PC-3 (cell line): ENCODE measurements at regions of chr18 and their contacts with region 1.

Region 1: GRCh38 chr18:62425465-62426195 is 97.2 kb upstream of the ZCCHC2 start:
- DNase-seq: peak; percentile 99
- ATAC-seq: peak; percentile 83
- H3K4me3 ChIP-seq: peak overlapping the region; percentile 60
- H3K27ac ChIP-seq: peak overlapping the region; percentile 91
- H3K4me1 ChIP-seq: peaks cover 24% of the 10 kb centered on the region
- H3K27me3 ChIP-seq: no peaks in the 10 kb centered on the region
- CTCF ChIP-seq: peak; percentile 82

Region 2: GRCh38 chr18:62088156-62088555 is 337.5 kb before region 1 on chr18:
- CTCF ChIA-PET with region 1: no interaction called
- POLR2A ChIA-PET with region 1: no interaction called
- intact Hi-C with region 1: no loop called
- DNase-seq: no peak
- ATAC-seq: no peak
- H3K4me3 ChIP-seq: no peak overlapping the region
- H3K27ac ChIP-seq: no peak overlapping the region
- H3K4me1 ChIP-seq: no peaks in the 10 kb centered on the region
- H3K27me3 ChIP-seq: no peaks in the 10 kb centered on the region
- CTCF ChIP-seq: no peak

Region 3: DNA sequence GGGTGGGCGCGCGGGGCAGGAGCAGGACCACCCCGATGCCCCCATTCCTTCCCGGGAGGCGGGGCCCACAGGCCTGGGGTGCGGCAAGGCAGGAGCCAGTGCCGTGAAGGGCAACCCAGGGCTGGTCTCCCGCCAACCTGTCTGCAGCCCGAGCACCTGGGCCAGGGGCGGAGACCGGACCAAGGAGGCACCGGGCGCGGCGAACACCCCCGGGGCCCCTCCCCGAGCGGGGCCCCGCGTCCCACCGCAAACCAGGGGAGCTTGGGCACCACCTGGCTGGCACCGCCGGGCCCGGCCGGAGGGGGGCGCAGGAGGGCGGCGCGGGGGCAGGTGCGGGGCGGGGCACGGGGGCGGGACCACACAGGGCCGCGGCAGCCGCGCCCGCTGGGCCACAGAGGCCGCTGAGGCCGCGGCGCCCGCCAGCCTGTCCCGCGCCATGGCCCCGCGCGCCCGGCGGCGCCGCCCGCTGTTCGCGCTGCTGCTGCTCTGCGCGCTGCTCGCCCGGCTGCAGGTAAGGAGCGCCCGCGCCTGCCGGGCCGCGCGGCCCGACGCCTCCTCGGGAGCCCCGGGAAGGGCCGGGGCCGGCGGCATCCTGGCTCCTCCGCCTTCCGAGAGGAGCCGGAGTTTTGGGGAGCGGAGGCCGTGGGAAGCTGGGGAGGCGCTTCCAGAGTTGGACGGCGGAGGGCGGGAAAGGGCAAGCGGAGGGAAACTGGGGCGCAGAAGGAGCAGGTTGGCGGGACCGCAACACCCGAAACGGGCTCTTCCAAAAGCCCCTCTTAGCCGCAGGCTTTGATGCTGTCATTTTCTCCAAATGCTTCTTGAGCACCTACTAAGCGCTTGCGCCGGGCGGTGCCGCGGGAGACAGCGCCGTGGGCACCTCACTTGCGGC is 100.5 kb before region 1 on chr18 and contains the start of gene TNFRSF11A:
- CTCF ChIA-PET with region 1: interaction called, 6 read pairs
- POLR2A ChIA-PET with region 1: no interaction called
- intact Hi-C with region 1: loop called (anchors 2 kb)
- DNase-seq: peak; percentile 71
- ATAC-seq: peak; percentile 56
- H3K4me3 ChIP-seq: peak within 1 kb of the TSS; percentile 98
- H3K27ac ChIP-seq: peak within 1 kb of the TSS; percentile 29
- H3K4me1 ChIP-seq: peaks cover 34% of the 10 kb centered on the region
- H3K27me3 ChIP-seq: no peaks in the 10 kb centered on the region
- CTCF ChIP-seq: peak; percentile 38
- total RNA-seq, gene TNFRSF11A: 25.9 and 26.5 TPM in 2 replicates

Region 4: DNA sequence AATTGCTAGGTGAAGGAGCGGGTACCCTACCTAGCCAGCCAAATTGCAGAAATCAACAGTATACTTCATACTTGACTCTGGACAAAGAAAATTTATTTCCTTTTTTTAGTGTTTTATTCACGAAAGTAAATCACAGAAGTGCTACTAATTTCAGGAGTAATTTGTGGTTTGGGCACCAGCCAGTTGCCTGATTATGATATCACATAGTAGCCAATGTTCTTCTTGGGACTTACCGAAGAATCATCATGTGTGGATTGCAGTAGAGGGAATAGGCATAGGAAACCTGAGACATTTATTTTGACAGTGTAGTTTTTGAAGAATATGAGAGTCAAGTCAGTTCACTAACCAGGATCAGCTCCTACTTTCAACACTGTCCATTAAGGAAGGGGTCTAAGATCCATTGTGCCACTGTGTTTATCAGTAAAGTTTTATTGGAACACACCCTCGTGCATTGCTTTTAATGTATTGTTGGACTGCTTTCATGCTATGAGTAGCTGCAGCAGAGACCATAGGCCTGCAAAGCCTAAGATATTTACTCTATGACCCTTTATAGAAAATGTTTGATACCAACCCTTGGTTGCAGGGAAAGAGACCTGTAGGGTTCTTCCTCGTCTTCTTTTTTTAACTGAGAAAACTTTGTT is 68.4 kb before region 1 on chr18:
- CTCF ChIA-PET with region 1: no interaction called
- POLR2A ChIA-PET with region 1: no interaction called
- intact Hi-C with region 1: no loop called
- DNase-seq: no peak
- ATAC-seq: no peak
- H3K4me3 ChIP-seq: no peak overlapping the region
- H3K27ac ChIP-seq: no peak overlapping the region
- H3K4me1 ChIP-seq: no peaks in the 10 kb centered on the region
- H3K27me3 ChIP-seq: no peaks in the 10 kb centered on the region
- CTCF ChIP-seq: no peak

Region 5: DNA sequence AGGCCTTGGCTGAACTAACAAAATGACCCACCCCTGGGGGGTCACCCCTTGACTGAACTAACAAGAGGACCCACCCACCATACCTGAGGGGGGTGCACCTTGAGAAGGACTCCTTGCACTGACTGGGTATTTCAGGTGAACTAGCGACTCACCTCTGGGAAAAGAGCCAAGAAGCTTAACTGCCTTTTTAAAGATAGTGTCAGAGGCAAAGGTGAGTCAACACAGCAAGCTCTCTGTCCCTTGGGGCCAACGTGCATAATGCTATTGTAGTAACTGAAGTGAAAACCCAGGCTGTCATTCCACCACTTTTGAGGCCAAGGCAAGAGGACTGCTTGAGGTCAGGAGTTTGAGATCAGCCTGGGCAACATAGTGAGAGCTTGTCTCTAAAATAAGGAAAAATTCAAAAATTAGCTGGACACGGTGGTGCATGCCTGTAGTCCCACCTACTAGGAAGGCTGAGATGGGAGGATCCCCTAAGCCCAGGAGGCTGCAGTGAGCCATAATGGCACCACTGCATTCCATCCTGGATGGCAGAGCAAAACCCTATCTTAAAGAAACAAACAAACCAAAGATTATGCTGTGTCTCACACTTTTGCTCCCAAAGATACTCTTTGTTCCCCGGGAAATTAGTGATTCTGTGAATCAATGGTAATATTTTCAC is 60.8 kb after region 1 on chr18:
- CTCF ChIA-PET with region 1: interaction called, 4 read pairs
- POLR2A ChIA-PET with region 1: no interaction called
- intact Hi-C with region 1: loop called (anchors 1 kb)
- DNase-seq: peak; percentile 98
- ATAC-seq: peak; percentile 80
- H3K4me3 ChIP-seq: peak overlapping the region; percentile 58
- H3K27ac ChIP-seq: peak overlapping the region; percentile 96
- H3K4me1 ChIP-seq: peaks cover 25% of the 10 kb centered on the region
- H3K27me3 ChIP-seq: no peaks in the 10 kb centered on the region
- CTCF ChIP-seq: no peak

Region 6: GRCh38 chr18:62522504-62523254 is 97.0 kb after region 1 on chr18 and contains the start of gene ZCCHC2:
- CTCF ChIA-PET with region 1: interaction called, 9 read pairs
- POLR2A ChIA-PET with region 1: no interaction called
- intact Hi-C with region 1: loop called (anchors 1 kb)
- DNase-seq: peak; percentile 98
- ATAC-seq: peak; percentile 79
- H3K4me3 ChIP-seq: peak within 1 kb of the TSS; percentile 93
- H3K27ac ChIP-seq: peak within 1 kb of the TSS; percentile 86
- H3K4me1 ChIP-seq: peaks cover 28% of the 10 kb centered on the region
- H3K27me3 ChIP-seq: no peaks in the 10 kb centered on the region
- CTCF ChIP-seq: no peak
- total RNA-seq, gene ZCCHC2: 17.3 and 24.9 TPM in 2 replicates

Region 7: GRCh38 chr18:62584241-62585120 is 158.9 kb after region 1 on chr18:
- CTCF ChIA-PET with region 1: interaction called, 4 read pairs
- POLR2A ChIA-PET with region 1: no interaction called
- intact Hi-C with region 1: loop called (anchors 1 kb)
- DNase-seq: peak; percentile 90
- ATAC-seq: peak; percentile 83
- H3K4me3 ChIP-seq: no peak overlapping the region
- H3K27ac ChIP-seq: no peak overlapping the region
- H3K4me1 ChIP-seq: peaks cover 4% of the 10 kb centered on the region
- H3K27me3 ChIP-seq: no peaks in the 10 kb centered on the region
- CTCF ChIP-seq: peak; percentile 97